Gastrocnemius medialis (tissue), 4 donors: ENCODE measurements at regions of chr15 and their contacts with region 1.

Region 1: DNA sequence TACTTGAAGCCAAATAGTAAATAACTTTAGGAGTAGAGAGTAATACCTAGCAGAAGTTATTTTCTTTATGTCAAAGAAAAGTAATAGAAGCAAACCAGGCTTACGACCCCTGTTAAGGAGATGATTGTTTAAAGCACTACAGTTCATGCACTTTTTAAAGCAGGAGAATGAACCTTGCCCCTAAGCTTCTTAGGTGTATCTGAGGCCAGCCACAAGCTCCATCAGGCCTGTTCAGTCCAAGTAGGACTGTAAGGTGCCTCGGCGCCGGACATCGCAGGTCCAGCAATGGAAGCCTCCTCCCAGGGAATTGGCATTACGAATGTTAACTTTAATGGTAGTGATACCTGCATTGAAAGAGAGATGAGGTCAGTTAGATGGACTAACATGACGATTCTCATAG is 16.5 kb downstream of the GATM start:
- DNase-seq: no peak
- ATAC-seq: no peak
- H3K4me3 ChIP-seq: no peak overlapping the region
- H3K27ac ChIP-seq: no peak overlapping the region
- H3K4me1 ChIP-seq: no peaks in the 10 kb centered on the region
- H3K27me3 ChIP-seq: no peaks in the 10 kb centered on the region
- CTCF ChIP-seq: no peak
- POLR2A ChIP-seq: no peak

Region 2: GRCh38 chr15:45268135-45268534 is 93.7 kb before region 1 on chr15:
- in situ Hi-C with region 1: no loop called
- intact Hi-C with region 1: no loop called
- DNase-seq: no peak
- ATAC-seq: no peak
- H3K4me3 ChIP-seq: no peak overlapping the region
- H3K27ac ChIP-seq: no peak overlapping the region
- H3K4me1 ChIP-seq: no peaks in the 10 kb centered on the region
- H3K27me3 ChIP-seq: no peaks in the 10 kb centered on the region
- CTCF ChIP-seq: no peak
- POLR2A ChIP-seq: no peak

Region 3: DNA sequence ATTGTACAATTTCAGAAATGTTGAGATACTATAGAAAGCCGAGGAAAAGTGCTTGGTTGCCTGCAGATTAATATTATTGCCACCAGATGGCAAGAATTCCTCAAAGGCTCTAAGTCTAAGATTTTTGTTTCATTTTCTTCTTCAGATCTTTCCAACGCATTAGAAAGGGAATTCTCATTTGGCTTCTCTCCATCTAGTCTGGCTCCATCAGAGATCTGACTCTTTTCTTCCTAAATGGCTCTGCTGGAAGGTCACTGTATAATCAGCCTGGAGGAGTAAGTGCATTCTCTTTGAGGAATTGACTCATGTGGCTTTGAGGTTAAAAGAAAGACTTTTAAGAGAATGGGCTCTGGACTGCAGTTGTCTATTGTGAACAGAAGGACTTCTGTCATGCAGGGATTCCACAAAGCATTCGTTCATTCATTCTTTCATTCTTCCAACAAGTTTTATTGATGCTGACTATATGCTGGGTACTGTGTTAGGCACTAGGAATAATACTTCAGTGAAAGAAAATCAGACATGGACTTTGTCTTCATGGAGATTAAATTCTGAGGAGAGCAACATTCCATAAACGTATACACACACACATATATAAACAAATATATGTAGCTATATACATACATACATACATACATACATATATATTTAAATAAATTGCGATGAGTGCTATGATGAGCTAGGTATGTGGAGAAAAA is 54.5 kb before region 1 on chr15:
- in situ Hi-C with region 1: loop called in 1 of 4 experiments (anchors 10 kb)
- intact Hi-C with region 1: no loop called
- DNase-seq: no peak
- ATAC-seq: peak in 1 of 2 donors; percentile 30
- H3K4me3 ChIP-seq: no peak overlapping the region
- H3K27ac ChIP-seq: no peak overlapping the region
- H3K4me1 ChIP-seq: peaks cover 0 to 3% of the 10 kb centered on the region in 2 donors
- H3K27me3 ChIP-seq: no peaks in the 10 kb centered on the region
- CTCF ChIP-seq: peak in 2 of 5 experiments; percentile 34 to 42
- POLR2A ChIP-seq: no peak

Region 4: DNA sequence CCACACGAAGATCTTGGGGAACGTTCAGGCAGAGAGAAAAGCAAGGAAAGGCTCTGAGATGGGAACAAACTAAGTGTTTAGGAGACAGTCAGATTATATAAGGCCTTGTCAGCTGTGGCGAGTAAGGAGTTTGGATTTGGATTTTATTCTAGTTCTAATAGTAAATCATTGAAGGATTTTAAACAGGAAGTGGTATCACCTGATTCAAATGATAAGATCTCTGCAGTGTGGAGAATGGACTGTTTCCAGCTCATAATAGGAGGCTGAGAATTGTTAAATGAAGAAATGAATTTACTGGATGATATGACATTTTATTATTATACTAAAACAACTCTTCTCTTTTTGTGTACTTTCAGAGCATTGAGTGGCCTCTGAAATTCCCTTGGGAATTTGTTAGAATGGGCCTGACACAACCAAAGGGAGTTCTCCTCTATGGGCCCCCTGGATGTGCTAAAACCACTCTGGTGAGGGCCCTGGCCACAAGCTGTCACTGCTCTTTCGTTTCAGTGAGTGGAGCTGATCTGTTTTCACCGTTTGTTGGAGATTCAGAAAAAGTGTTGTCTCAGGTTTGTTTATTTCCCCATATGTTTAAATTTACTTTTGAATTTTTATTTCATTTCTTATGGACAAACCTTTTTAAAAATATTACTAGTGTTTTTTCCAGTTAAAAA is 52.5 kb after region 1 on chr15:
- in situ Hi-C with region 1: no loop called
- intact Hi-C with region 1: no loop called
- DNase-seq: no peak
- ATAC-seq: no peak
- H3K4me3 ChIP-seq: no peak overlapping the region
- H3K27ac ChIP-seq: no peak overlapping the region
- H3K4me1 ChIP-seq: no peaks in the 10 kb centered on the region
- H3K27me3 ChIP-seq: no peaks in the 10 kb centered on the region
- CTCF ChIP-seq: no peak
- POLR2A ChIP-seq: no peak